ENCODE measurements at regions of chr19 and their contacts with region 1.

Region 1: GRCh38 chr19:23283927-23284326 is 33.7 kb upstream of the ZNF724 start:
- DNase-seq: peak; percentile 37 to 81 (median 64)
- ATAC-seq: peak; percentile 99
- H3K4me3 ChIP-seq: no peak overlapping the region
- H3K4me3 Mint-ChIP-seq: no peak overlapping the region
- H3K27ac ChIP-seq: no peak overlapping the region
- H3K27ac Mint-ChIP-seq: peak overlapping the region; percentile 49
- H3K4me1 ChIP-seq: no peaks in the 10 kb centered on the region
- H3K4me1 Mint-ChIP-seq: peaks cover 12% of the 10 kb centered on the region
- H3K27me3 ChIP-seq: no peaks in the 10 kb centered on the region
- H3K27me3 Mint-ChIP-seq: no peaks in the 10 kb centered on the region
- CTCF ChIP-seq: peak; percentile 73

Region 2: GRCh38 chr19:23116802-23117571 is 166.9 kb before region 1 on chr19 and contains the start of gene ZNF730:
- CTCF ChIA-PET with region 1: no interaction called
- POLR2A ChIA-PET with region 1: no interaction called
- intact Hi-C with region 1: loop called in 1 of 2 experiments (anchors 10 kb)
- DNase-seq: peak in 8 of 9 experiments; percentile 5 to 65 (median 44)
- ATAC-seq: peak; percentile 69
- H3K4me3 ChIP-seq: peak within 1 kb of the TSS; percentile 44 to 49
- H3K4me3 Mint-ChIP-seq: peak within 1 kb of the TSS; percentile 80
- H3K27ac ChIP-seq: no peak within 1 kb of the TSS
- H3K27ac Mint-ChIP-seq: no peak within 1 kb of the TSS
- H3K4me1 ChIP-seq: no peaks in the 10 kb centered on the region
- H3K4me1 Mint-ChIP-seq: peaks cover 4% of the 10 kb centered on the region
- H3K27me3 ChIP-seq: no peaks in the 10 kb centered on the region
- H3K27me3 Mint-ChIP-seq: peaks cover 16% of the 10 kb centered on the region
- CTCF ChIP-seq: no peak
- total RNA-seq, gene ZNF730: not detected

Region 3: GRCh38 chr19:23273590-23274413 is 10.1 kb before region 1 on chr19:
- CTCF ChIA-PET with region 1: interaction called, 7 read pairs
- POLR2A ChIA-PET with region 1: no interaction called
- intact Hi-C with region 1: loop called in 1 of 2 experiments (anchors 1 kb)
- DNase-seq: peak; percentile 80 to 95 (median 92)
- ATAC-seq: peak; percentile 98
- H3K4me3 ChIP-seq: peak overlapping the region; percentile 80 to 95
- H3K4me3 Mint-ChIP-seq: peak overlapping the region; percentile 98
- H3K27ac ChIP-seq: peak overlapping the region; percentile 78 to 83
- H3K27ac Mint-ChIP-seq: peak overlapping the region; percentile 97
- H3K4me1 ChIP-seq: peaks cover 8% of the 10 kb centered on the region
- H3K4me1 Mint-ChIP-seq: peaks cover 35% of the 10 kb centered on the region
- H3K27me3 ChIP-seq: no peaks in the 10 kb centered on the region
- H3K27me3 Mint-ChIP-seq: no peaks in the 10 kb centered on the region
- CTCF ChIP-seq: no peak

Region 4: GRCh38 chr19:23345838-23346237 is 61.9 kb after region 1 on chr19:
- CTCF ChIA-PET with region 1: no interaction called
- POLR2A ChIA-PET with region 1: no interaction called
- intact Hi-C with region 1: no loop called
- DNase-seq: no peak
- ATAC-seq: no peak
- H3K4me3 ChIP-seq: no peak overlapping the region
- H3K4me3 Mint-ChIP-seq: no peak overlapping the region
- H3K27ac ChIP-seq: no peak overlapping the region
- H3K27ac Mint-ChIP-seq: no peak overlapping the region
- H3K4me1 ChIP-seq: no peaks in the 10 kb centered on the region
- H3K4me1 Mint-ChIP-seq: peaks cover 4% of the 10 kb centered on the region
- H3K27me3 ChIP-seq: no peaks in the 10 kb centered on the region
- H3K27me3 Mint-ChIP-seq: no peaks in the 10 kb centered on the region
- CTCF ChIP-seq: no peak